ENCODE measurements at regions of chr1 and their contacts with region 1.

Region 1: DNA sequence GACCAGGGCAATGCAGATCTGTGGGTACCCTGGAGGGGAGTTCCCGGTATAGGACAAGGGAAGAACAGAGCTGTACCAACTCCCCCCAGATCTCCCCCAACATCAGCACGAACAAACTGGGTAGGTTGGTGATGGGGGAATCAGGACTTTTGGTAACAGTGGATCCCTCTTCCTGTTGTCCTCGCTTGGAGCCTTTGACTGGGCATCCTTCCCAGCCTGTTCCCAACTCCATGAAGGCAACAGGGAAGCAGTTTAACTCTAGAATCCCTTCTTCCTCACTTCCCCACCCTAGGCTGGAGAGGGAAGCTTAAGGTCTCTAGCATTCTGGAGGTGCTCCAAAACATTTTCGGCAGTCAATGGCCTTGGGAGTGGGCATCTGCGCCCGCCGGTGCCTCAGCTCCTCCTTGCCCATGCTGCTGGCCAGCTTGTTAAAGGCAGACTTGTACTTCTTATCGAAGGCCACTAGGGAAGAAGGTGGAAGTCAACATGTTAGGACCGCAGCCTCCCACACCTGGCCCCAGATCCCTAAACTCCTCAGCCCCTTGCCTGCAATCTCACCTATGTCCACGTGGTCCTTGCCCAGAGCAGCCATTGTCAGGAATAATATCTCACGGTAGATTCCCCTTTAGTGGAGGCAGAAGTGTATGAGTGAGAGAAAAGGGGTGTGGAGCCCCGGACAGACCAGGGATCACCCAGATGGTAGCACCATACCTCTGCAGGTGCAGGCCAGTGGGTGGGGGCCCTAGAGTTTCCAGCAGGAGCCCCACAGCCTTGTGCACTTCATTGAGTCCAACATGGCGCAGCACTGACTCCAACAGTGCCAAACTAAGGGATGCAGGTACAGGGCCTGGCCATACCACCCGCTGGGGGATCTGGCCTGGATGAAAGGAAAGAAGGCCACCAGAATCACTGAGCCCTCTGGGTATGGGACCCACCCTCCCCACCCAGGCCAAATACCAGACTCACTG is 7.5 kb upstream of the GATAD2B start:
- DNase-seq: no peak
- H3K4me3 ChIP-seq: no peak overlapping the region
- H3K27ac ChIP-seq: no peak overlapping the region
- H3K4me1 ChIP-seq: no peaks in the 10 kb centered on the region
- H3K27me3 ChIP-seq: no peaks in the 10 kb centered on the region
- CTCF ChIP-seq: peak in 1 of 2 donors; percentile 2

Region 2: DNA sequence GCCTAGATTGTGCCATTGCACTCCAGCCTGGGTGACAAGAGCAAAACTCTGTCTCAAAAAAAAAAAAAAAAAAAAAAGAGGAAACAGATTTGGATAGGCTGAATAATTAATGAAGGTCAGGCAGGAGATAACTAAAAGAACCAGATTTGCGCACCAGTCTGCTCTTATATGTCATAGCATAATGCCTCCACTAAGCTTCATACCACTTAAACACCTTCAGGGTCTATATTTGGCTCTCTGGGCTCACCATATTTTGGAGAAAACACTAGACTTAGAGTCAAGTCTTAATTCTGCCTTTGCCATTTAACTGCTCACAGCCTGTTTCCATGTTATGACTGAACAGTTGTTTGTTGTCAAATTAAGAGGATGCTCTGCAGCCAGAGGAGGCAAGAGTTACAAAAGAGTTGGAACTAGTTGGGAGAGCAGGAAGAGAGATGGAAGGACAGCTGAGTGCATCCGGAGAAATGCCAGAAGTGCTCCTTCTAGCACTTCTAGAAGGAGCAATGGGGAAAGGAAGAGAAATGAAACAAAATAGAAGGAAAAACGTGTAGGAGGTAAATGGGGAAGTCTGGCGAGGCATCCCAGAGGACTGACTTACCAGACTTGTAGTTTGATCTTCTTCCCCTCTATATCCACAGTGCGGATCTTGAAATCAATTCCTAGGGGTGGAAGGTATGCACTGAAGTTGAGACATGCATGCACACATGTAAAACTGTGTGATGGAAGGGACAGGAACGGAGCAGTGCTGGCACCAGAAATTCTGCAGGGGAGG is 54.0 kb after region 1 on chr1:
- CTCF ChIA-PET with region 1: no interaction called
- dilution Hi-C with region 1: loop called (anchors 5 kb)
- in situ Hi-C with region 1: no loop called
- intact Hi-C with region 1: no loop called
- DNase-seq: no peak
- H3K4me3 ChIP-seq: no peak overlapping the region
- H3K27ac ChIP-seq: no peak overlapping the region
- H3K4me1 ChIP-seq: peaks cover 8% of the 10 kb centered on the region
- H3K27me3 ChIP-seq: no peaks in the 10 kb centered on the region
- CTCF ChIP-seq: no peak

Region 3: GRCh38 chr1:154288661-154289060 is 358.4 kb after region 1 on chr1:
- CTCF ChIA-PET with region 1: no interaction called
- dilution Hi-C with region 1: no loop called
- in situ Hi-C with region 1: no loop called
- intact Hi-C with region 1: no loop called
- DNase-seq: no peak
- H3K4me3 ChIP-seq: no peak overlapping the region
- H3K27ac ChIP-seq: no peak overlapping the region
- H3K4me1 ChIP-seq: no peaks in the 10 kb centered on the region
- H3K27me3 ChIP-seq: no peaks in the 10 kb centered on the region
- CTCF ChIP-seq: no peak